Esophagus squamous epithelium (tissue), 5 donors: ENCODE measurements at regions of chr19 and their contacts with region 1.

Region 1: GRCh38 chr19:40217027-40217810 is 965 bp downstream of the TTC9B start:
- DNase-seq: no peak
- H3K4me3 ChIP-seq: peak overlapping the region; percentile 2 to 42 (median 26)
- H3K27ac ChIP-seq: no peak overlapping the region
- H3K4me1 ChIP-seq: peaks cover 0 to 21% (median 9%) of the 10 kb centered on the region in 3 donors
- H3K27me3 ChIP-seq: peaks cover 10 to 62% (median 23%) of the 10 kb centered on the region in 4 donors
- CTCF ChIP-seq: peak in 5 of 6 experiments; percentile 21 to 51 (median 37)
- POLR2A ChIP-seq: no peak

Region 2: GRCh38 chr19:40139533-40140287 is 77.5 kb before region 1 on chr19:
- intact Hi-C with region 1: loop called (anchors 10 kb)
- DNase-seq: no peak
- H3K4me3 ChIP-seq: no peak overlapping the region
- H3K27ac ChIP-seq: no peak overlapping the region
- H3K4me1 ChIP-seq: no peaks in the 10 kb centered on the region
- H3K27me3 ChIP-seq: peaks cover 0 to 19% (median 0%) of the 10 kb centered on the region in 4 donors
- CTCF ChIP-seq: peak; percentile 59 to 72 (median 60)
- POLR2A ChIP-seq: no peak

Region 3: GRCh38 chr19:40178756-40179155 is 38.5 kb before region 1 on chr19:
- intact Hi-C with region 1: no loop called
- DNase-seq: no peak
- H3K4me3 ChIP-seq: no peak overlapping the region
- H3K27ac ChIP-seq: no peak overlapping the region
- H3K4me1 ChIP-seq: no peaks in the 10 kb centered on the region
- H3K27me3 ChIP-seq: peaks cover 0 to 3% (median 0%) of the 10 kb centered on the region in 4 donors
- CTCF ChIP-seq: no peak
- POLR2A ChIP-seq: no peak